Activated naive CD4-positive, alpha-beta T cell treated with anti-CD3 and anti-CD28 coated beads for 36 hours (primary cell): ENCODE measurements at regions of chr2 and their contacts with region 1.

Region 1: DNA sequence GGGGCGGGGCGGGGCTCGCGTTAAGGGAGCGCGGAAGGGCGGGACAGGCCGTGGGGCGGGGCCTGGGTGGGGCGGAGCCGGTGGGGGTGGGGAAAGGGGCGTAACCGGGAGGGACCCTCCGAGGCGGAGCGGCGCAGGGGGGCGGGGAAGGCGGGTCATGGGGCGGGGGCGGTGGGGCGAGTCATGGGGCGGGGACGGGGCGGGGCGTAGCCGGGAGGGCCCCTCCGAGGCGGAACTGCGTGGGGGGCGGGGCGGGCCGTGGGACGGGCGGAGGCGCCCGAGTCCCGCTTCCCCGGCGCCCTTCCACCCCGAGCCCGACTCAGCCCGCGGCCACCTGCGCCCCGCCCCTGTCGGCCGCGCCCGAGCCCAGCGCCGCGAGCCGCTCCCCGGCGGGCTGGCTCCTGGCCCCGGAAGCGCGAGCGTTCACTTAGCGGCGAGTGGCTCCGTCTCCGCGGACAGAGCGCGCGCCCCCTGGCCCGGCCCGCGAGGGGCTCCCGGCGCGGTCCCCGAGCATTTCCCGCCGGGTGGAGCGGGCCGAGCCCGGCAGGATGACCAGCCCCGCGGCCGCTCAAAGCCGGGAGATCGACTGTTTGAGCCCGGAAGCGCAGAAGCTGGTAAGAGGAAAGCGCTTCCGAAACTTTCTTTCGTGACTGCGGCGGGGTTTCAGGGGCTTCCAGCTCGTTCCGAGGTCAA is 64.7 kb downstream of the LRRFIP1 start:
- DNase-seq: peak; percentile 94
- H3K4me3 Mint-ChIP-seq: peak overlapping the region; percentile 87
- H3K27ac Mint-ChIP-seq: peak overlapping the region; percentile 95
- H3K4me1 Mint-ChIP-seq: peaks cover 66% of the 10 kb centered on the region
- H3K27me3 Mint-ChIP-seq: no peaks in the 10 kb centered on the region

Region 2: GRCh38 chr2:236545814-236546480 is 1146.1 kb before region 1 on chr2:
- CTCF ChIA-PET with region 1: no interaction called
- intact Hi-C with region 1: loop called (anchors 10 kb)
- DNase-seq: peak; percentile 70
- H3K4me3 Mint-ChIP-seq: peak overlapping the region; percentile 64
- H3K27ac Mint-ChIP-seq: peak overlapping the region; percentile 89
- H3K4me1 Mint-ChIP-seq: peaks cover 82% of the 10 kb centered on the region
- H3K27me3 Mint-ChIP-seq: no peaks in the 10 kb centered on the region

Region 3: DNA sequence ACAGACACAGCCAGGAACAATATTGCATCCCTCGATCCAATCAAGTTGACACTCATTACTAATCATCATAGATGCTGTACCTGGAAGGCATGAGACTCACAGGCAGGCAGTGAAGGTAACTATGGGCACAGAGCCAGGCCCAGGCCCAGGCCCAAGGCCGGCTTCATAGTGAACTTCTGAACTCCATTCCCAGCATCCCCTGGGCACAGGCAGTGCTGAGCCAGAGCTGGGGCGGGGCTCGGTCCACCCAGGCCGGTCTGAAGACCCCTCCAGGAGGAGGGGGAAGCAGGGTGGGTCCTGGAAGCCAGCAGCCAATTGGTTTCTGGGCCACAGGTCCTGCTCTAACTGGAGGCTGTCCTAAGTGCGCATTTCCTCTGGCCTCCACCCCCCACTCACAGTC is 167.4 kb before region 1 on chr2:
- CTCF ChIA-PET with region 1: no interaction called
- intact Hi-C with region 1: no loop called
- DNase-seq: no peak
- H3K4me3 Mint-ChIP-seq: no peak overlapping the region
- H3K27ac Mint-ChIP-seq: no peak overlapping the region
- H3K4me1 Mint-ChIP-seq: no peaks in the 10 kb centered on the region
- H3K27me3 Mint-ChIP-seq: no peaks in the 10 kb centered on the region

Region 4: GRCh38 chr2:237731663-237732062 is 39.6 kb after region 1 on chr2:
- CTCF ChIA-PET with region 1: interaction called, 5 read pairs
- intact Hi-C with region 1: loop called (anchors 1 kb)
- DNase-seq: peak; percentile 66
- H3K4me3 Mint-ChIP-seq: no peak overlapping the region
- H3K27ac Mint-ChIP-seq: peak overlapping the region; percentile 17
- H3K4me1 Mint-ChIP-seq: peaks cover 46% of the 10 kb centered on the region
- H3K27me3 Mint-ChIP-seq: no peaks in the 10 kb centered on the region

Region 5: GRCh38 chr2:237818066-237818473 is 126.0 kb after region 1 on chr2:
- CTCF ChIA-PET with region 1: no interaction called
- intact Hi-C with region 1: loop called (anchors 1 kb)
- DNase-seq: no peak
- H3K4me3 Mint-ChIP-seq: no peak overlapping the region
- H3K27ac Mint-ChIP-seq: no peak overlapping the region
- H3K4me1 Mint-ChIP-seq: peaks cover 26% of the 10 kb centered on the region
- H3K27me3 Mint-ChIP-seq: no peaks in the 10 kb centered on the region

Region 6: DNA sequence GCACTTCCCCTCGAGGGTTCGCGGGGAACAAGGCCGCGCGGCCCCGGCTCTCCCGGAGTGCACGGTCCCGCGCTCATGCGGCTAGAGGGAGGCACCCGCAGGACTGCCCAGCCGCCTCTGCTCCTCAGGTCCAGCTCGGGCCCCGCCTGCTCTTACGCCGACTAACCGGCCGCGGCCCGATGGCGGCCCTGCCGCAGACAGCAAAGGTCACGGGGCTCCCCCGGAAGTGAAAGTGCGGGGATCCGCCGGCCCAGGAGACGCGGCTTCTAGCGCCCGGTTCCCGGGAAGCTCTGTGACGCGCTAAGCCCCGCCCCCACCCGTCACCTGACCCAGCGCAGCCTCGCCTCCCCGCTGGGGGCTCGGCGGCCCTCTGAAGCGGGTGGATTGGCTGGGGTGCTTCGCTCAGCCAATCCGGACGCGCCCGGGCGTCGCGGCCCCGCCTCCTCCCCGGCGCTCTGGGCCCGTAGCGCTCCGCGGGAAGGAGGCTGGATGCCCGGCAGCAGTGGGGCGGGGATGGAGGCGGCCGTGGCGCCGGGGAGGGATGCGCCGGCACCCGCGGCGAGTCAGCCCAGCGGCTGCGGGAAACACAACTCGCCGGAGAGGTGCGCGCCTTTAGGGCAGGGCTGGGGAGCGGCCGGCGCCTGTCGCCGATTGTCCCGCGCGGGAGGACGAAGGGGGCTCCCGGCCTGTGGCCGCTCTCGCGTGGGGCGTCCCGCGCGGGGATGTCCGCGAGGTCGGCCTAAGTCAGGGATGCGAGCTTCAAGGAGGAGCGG is 368.7 kb after region 1 on chr2 and contains the start of gene SCLY:
- CTCF ChIA-PET with region 1: no interaction called
- intact Hi-C with region 1: loop called (anchors 5 kb)
- DNase-seq: peak; percentile 99
- H3K4me3 Mint-ChIP-seq: peak within 1 kb of the TSS; percentile 90
- H3K27ac Mint-ChIP-seq: peak within 1 kb of the TSS; percentile 87
- H3K4me1 Mint-ChIP-seq: peaks cover 48% of the 10 kb centered on the region
- H3K27me3 Mint-ChIP-seq: peaks cover 3% of the 10 kb centered on the region
- total RNA-seq, gene SCLY: 46.4 to 46.7 TPM

Region 7: DNA sequence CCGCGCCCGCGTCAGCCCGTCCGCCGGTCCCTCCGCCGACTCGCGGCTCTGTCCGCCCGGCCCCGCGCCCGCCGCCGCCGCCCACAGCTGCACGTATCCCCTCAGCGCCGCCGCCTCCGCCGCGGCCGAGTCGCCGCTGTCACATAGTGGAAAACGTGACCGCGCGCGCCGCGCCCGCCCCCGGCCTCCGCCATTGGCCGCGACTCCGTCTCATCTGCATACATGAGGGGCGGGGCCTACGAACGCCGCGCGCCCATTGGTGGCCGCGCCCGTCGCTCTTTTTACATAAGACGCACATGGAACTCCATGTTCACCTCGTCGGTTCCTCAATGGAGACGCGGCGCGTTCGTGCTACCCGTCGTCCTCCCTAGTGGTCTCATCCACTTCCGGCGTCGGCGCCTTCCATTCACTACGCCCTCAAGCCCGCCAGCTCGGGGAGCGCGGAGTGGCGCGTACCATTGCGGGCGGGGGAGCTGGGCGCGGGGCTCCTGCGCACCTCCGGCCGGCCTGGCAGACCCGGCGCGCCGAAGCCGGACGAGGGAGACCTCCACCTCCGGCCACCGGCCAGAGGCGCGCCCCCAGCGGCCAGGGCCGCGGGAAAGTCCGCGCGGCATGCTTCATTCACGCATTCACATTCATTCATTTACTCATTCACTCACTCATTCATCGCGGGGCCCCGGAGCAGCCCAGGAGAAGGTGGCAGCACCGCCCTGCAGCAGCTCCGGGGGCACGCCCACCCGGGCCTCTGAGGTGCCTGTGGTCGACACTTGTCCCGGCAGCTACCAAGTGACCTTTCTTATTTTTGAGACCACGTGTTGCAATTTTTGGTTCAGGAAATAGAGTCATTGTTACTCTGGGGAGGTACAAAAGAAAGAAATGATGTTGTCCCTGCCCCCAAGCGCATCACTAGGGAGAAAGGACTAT is 596.9 kb after region 1 on chr2:
- CTCF ChIA-PET with region 1: no interaction called
- intact Hi-C with region 1: loop called (anchors 2 kb)
- DNase-seq: peak; percentile 97
- H3K4me3 Mint-ChIP-seq: peak overlapping the region; percentile 89
- H3K27ac Mint-ChIP-seq: peak overlapping the region; percentile 85
- H3K4me1 Mint-ChIP-seq: peaks cover 36% of the 10 kb centered on the region
- H3K27me3 Mint-ChIP-seq: no peaks in the 10 kb centered on the region